Natural killer cell (primary cell): ENCODE measurements at regions of chr11 and their contacts with region 1.

Region 1: DNA sequence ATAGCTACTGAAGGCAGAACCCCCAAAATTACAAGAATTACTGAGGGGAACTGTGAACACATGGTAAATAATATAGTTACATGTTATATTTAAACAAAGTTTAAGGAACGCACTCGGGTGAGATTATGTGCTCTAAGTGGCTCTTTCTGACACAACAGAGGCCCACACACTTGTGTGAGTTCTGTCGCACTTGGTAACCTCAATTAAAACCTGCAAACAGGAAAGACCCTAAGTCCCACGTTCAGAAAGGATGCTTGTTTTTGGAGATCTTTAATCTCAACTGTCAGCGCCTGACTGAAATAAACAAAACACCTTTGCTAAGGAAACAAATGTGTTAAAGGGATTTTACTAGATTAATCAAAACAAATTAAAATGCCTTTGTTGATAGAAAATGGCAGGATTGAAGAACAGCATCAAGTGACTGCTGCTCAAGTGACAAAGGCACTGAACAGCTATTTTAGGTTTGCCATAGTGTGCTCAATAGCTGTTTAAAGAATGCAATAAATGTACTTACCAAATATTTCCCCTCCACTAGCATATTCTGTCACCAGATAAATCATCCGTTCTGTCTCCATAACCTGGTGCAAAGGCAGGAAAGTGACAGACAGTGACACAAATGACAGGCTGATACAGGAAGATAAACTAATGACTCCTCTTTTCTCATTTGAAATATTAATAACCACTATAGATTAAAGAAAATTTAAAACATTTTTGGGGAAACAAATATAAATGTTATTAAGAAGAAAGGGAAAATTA is 116.3 kb upstream of the APOA1 start:
- DNase-seq: peak in 1 of 2 donors; percentile 58
- ATAC-seq: peak; percentile 76 to 87 (median 87)
- H3K4me3 ChIP-seq: no peak overlapping the region
- H3K4me3 Mint-ChIP-seq: peak overlapping the region; percentile 50
- H3K27ac ChIP-seq: peak overlapping the region; percentile 82
- H3K27ac Mint-ChIP-seq: peak overlapping the region; percentile 87 to 92
- H3K4me1 ChIP-seq: peaks cover 20% of the 10 kb centered on the region
- H3K4me1 Mint-ChIP-seq: peaks cover 39 to 42% of the 10 kb centered on the region in 2 donors
- H3K27me3 ChIP-seq: no peaks in the 10 kb centered on the region
- H3K27me3 Mint-ChIP-seq: no peaks in the 10 kb centered on the region
- CTCF ChIP-seq: no peak

Region 2: DNA sequence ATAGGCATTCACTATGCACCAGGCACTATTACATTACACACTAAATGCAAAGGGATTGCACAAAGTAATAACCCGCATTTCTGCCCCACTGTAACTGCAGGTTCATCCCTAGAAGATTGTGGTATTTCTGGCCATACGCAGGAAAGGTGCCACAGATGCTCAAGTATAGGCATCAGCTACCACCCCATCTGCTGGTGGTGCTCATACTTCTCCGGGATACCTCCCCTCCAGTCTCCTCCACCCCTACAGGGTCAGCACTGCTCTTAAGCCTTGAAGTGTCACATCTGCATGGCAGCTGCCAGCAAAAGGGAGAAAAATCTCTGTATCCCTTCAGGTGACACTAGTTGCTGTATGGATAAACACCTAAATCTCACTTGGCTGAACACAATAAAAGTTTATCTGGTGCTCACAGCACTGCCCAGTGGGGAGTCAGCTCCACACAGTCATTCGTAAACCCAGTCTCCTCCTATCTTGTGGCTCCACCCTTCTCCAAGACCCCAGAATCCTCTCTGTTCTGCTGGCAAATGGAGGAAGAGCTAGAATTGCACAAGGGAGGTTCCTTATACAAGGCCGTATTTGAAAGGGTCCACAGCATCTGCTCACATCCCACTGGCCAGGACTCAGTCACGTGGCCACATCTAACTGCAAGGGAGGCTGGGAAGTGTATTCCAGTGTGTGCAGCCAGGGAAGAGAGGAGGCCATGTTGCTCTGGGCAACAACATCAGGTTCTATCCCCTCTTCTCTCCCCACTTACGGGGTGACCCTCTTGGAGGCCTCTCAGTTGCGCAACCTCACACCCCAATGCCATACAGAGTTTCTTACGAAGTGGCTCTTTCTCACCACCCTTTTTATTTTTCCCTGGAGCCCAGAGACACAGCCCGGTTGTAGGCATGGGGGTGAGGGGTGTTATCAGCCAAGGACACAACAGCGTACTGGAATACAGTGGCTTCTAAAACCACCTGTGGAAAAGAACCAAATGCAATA is 295.6 kb before region 1 on chr11:
- intact Hi-C with region 1: no loop called
- DNase-seq: no peak
- ATAC-seq: no peak
- H3K4me3 ChIP-seq: no peak overlapping the region
- H3K4me3 Mint-ChIP-seq: no peak overlapping the region
- H3K27ac ChIP-seq: no peak overlapping the region
- H3K27ac Mint-ChIP-seq: no peak overlapping the region
- H3K4me1 ChIP-seq: no peaks in the 10 kb centered on the region
- H3K4me1 Mint-ChIP-seq: no peaks in the 10 kb centered on the region
- H3K27me3 ChIP-seq: peaks cover 2% of the 10 kb centered on the region
- H3K27me3 Mint-ChIP-seq: peaks cover 25 to 36% of the 10 kb centered on the region in 2 donors
- CTCF ChIP-seq: no peak

Region 3: GRCh38 chr11:116930177-116930576 is 23.5 kb before region 1 on chr11:
- intact Hi-C with region 1: loop called (anchors 2 kb)
- DNase-seq: peak in 1 of 2 donors; percentile 72
- ATAC-seq: peak; percentile 33 to 66 (median 61)
- H3K4me3 ChIP-seq: peak overlapping the region; percentile 15
- H3K4me3 Mint-ChIP-seq: peak overlapping the region; percentile 79
- H3K27ac ChIP-seq: peak overlapping the region; percentile 95
- H3K27ac Mint-ChIP-seq: peak overlapping the region; percentile 85 to 91
- H3K4me1 ChIP-seq: peaks cover 58% of the 10 kb centered on the region
- H3K4me1 Mint-ChIP-seq: peaks cover 72 to 83% of the 10 kb centered on the region in 2 donors
- H3K27me3 ChIP-seq: no peaks in the 10 kb centered on the region
- H3K27me3 Mint-ChIP-seq: no peaks in the 10 kb centered on the region
- CTCF ChIP-seq: no peak